OCI-LY7 (cell line): ENCODE measurements at regions of chr4 and their contacts with region 1.

Region 1: DNA sequence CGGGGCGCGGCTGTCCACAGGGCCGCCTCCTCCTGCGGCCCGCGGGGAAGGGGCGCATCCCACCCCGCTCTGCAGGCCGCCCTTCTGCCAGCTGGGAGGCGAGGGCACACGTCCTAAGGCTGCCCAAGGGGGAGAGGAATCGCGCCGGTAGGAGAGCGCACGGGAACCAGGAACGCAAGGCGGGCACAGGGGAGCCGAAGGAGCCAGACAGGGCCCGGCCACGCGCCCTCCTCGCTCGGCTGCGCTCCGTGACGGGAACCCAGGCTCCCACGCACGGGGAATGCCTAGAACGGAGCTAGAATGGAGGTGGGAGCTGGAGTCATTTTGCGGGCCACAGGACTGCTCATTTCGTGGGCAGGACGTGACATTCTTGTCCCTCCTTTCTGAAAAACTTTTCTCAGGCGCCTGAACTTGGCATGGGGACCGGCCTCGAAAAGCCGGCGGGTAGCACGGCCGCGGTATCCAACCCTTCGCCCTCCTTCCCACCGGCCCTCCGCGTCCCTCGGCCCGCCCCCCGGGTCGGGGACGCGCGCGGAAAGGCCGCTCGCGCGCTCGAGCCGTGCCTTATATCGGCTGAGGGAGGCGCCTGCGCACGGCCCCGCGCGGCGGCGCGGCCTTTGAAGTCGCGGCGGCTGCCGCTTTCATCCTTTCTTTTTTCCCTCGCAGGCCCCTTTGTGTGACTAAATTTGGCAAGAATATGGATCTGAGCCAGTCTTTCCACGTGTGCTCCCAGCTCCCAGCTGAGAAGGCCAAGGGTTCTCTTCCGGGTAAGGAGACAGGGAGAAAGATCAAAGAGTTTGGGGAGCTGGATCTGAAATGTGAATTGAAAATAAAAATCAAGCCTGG is 4.2 kb upstream of the LEF1 start:
- DNase-seq: peak; percentile 64
- H3K4me3 ChIP-seq: peak overlapping the region; percentile 67
- H3K27ac ChIP-seq: no peak overlapping the region
- H3K4me1 ChIP-seq: peaks cover 49% of the 10 kb centered on the region
- CTCF ChIP-seq: no peak; the same call in 1 of the 2 replicates

Region 2: DNA sequence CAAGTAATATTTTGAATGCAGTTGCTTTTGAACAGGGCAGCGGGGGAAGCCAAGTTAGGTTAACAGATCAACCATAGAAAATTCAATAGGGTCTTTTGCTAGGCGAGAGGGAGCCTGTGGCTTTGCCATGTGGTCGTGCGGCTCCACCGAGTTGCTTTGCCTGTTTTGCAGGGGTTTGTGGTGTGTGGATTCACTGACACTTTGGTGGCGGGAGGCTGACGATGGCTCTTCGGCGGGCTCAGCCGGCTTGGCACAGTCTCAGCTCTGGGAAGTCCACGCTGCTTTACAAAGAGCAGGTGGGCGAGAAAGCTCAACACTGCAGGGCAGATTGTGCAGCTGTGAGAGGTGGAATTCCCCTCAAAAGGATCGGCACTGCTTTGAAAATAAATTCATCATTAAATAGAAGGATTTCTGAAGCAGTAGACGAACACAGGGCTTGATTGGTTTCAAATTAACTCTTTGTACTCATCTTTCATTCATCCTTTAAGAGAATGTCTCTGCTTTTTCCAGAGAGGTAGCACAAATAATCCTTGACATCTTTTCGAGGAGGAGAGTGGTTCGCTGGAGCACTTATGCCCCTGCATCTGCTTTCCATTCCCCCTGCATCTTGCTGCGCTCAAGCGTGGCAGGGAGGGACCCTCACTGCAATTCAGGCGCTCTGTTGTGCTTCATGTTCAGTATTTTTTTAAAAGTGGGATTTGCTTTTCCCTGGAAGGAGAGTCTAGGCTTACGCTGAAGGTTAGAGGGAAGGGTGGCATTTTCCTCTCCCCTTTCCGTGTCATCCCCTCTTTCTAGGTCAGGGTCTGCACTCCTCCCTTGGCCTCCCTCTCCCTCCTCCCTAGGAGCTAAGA is 197.5 kb after region 1 on chr4:
- CTCF ChIA-PET with region 1: no interaction called
- POLR2A ChIA-PET with region 1: no interaction called
- intact Hi-C with region 1: loop called (anchors 10 kb)
- DNase-seq: no peak
- H3K4me3 ChIP-seq: no peak overlapping the region
- H3K27ac ChIP-seq: no peak overlapping the region
- H3K4me1 ChIP-seq: peaks cover 4% of the 10 kb centered on the region
- CTCF ChIP-seq: no peak